Activated T-helper 1 cell treated with anti-CD3 and anti-CD28 coated beads, Interleukin-12 subunit alpha, Interleukin-12 subunit beta, Interleukin-2, Interleukin-4 antibody, amounts not matched to agents 30 ng/mL and 10 ng/mL and 1 ng/mL, durations not matched to agents 14 hours and 24 hours and 36 hours (primary cell): ENCODE measurements at regions of chr15 and their contacts with region 1.

Region 1: DNA sequence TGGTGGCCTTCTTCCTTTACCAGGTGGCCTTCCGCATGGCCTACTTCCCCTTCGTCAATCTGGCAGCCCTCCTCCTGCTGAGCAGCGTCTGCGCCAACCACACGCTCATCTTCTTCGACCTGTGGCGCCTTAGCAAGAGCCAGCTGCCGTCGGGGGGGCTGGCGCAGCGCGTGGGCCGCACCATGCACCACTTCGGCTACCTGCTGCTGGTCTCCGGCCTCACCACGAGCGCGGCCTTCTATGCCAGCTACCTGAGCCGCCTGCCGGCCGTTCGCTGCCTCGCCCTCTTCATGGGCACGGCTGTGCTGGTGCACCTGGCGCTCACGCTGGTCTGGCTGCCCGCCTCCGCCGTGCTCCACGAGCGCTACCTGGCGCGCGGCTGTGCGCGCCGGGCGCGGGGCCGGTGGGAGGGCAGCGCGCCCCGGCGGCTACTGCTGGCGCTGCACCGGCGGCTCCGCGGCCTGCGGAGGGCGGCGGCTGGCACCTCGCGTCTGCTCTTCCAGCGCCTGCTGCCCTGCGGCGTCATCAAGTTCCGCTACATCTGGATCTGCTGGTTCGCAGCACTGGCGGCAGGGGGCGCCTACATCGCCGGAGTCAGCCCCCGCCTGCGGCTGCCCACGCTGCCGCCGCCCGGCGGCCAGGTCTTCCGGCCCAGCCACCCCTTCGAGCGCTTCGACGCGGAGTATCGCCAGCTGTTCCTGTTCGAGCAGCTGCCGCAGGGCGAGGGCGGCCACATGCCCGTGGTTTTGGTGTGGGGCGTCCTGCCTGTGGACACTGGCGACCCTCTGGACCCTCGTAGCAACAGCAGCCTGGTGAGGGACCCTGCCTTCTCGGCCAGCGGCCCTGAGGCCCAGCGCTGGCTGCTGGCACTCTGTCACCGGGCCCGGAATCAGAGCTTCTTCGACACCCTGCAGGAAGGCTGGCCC is 9.9 kb downstream of the DISP2 start:
- DNase-seq: peak; percentile 83
- H3K4me3 Mint-ChIP-seq: peak overlapping the region; percentile 75
- H3K27ac Mint-ChIP-seq: no peak overlapping the region
- H3K4me1 Mint-ChIP-seq: peaks cover 11% of the 10 kb centered on the region
- H3K27me3 Mint-ChIP-seq: peaks cover 12% of the 10 kb centered on the region

Region 2: GRCh38 chr15:40344631-40345120 is 23.3 kb before region 1 on chr15:
- intact Hi-C with region 1: loop called (anchors 1 kb)
- DNase-seq: peak; percentile 64
- H3K4me3 Mint-ChIP-seq: no peak overlapping the region
- H3K27ac Mint-ChIP-seq: no peak overlapping the region
- H3K4me1 Mint-ChIP-seq: no peaks in the 10 kb centered on the region
- H3K27me3 Mint-ChIP-seq: peaks cover 6% of the 10 kb centered on the region

Region 3: DNA sequence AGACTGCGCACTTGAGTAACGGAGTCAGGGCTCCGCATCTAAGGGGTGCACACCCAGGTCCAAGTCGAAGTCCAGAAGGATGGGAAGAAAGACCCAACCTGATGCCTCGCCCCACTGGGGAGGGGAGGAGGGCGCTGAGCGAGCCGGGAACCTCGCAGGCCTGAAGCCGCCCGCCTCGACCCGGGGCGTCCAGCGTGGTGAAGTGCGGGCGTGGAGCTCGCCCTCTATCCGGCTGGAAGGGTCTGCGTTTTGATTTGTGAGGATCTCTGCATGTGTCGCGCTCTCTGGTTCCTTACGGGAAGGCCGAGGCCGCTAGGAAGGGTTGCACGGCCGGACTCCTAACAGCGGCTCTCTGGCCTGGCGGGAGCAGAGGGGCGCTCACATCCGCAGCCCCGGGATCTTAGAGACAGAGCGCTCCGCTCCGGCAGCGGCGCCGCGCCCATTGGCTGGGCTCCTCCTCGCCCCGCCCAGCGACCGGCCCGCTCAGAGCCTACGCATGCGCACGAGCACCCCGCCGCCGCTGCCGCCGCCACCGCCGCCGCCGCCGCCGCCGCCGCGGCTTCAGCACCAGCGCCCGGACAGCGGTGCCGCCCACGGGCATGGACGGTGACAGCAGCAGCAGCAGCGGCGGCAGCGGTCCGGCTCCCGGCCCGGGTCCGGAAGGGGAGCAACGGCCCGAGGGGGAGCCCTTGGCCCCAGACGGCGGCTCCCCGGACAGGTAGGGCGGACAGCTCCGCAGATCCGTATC is 10.1 kb before region 1 on chr15 and contains the start of gene DISP2:
- intact Hi-C with region 1: loop called (anchors 1 kb)
- DNase-seq: peak; percentile 82
- H3K4me3 Mint-ChIP-seq: peak within 1 kb of the TSS; percentile 80
- H3K27ac Mint-ChIP-seq: peak within 1 kb of the TSS; percentile 6
- H3K4me1 Mint-ChIP-seq: no peaks in the 10 kb centered on the region
- H3K27me3 Mint-ChIP-seq: peaks cover 29% of the 10 kb centered on the region
- total RNA-seq, gene DISP2: 0.02 and 0.54 TPM in 2 replicates

Region 4: DNA sequence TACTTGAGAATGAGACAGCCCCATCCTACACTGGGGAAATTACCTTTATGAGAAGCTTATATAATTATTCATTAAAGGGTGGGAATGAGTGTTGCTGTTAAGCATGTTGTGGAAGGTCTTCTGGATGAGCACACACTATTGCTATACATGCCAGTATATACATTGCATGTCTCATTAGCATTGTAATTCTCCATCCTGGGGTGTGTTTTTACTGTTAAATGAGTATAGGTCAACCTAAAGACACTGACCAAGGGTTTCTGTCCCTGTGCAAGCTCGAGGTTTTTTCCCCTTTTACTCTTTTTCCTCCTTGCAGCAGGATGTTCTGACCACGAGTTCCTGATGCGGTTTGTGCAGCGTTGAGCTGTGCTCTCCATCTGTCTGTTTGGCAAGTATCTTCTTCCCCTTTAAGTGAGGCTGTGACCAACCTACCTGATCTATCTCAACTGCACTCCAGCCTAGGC is 30.5 kb after region 1 on chr15:
- intact Hi-C with region 1: loop called (anchors 1 kb)
- DNase-seq: peak; percentile 17
- H3K4me3 Mint-ChIP-seq: peak overlapping the region; percentile 59
- H3K27ac Mint-ChIP-seq: peak overlapping the region; percentile 37
- H3K4me1 Mint-ChIP-seq: peaks cover 21% of the 10 kb centered on the region
- H3K27me3 Mint-ChIP-seq: no peaks in the 10 kb centered on the region